Esophagus squamous epithelium (tissue), 5 donors: ENCODE measurements at regions of chr17 and their contacts with region 1.

Region 1: DNA sequence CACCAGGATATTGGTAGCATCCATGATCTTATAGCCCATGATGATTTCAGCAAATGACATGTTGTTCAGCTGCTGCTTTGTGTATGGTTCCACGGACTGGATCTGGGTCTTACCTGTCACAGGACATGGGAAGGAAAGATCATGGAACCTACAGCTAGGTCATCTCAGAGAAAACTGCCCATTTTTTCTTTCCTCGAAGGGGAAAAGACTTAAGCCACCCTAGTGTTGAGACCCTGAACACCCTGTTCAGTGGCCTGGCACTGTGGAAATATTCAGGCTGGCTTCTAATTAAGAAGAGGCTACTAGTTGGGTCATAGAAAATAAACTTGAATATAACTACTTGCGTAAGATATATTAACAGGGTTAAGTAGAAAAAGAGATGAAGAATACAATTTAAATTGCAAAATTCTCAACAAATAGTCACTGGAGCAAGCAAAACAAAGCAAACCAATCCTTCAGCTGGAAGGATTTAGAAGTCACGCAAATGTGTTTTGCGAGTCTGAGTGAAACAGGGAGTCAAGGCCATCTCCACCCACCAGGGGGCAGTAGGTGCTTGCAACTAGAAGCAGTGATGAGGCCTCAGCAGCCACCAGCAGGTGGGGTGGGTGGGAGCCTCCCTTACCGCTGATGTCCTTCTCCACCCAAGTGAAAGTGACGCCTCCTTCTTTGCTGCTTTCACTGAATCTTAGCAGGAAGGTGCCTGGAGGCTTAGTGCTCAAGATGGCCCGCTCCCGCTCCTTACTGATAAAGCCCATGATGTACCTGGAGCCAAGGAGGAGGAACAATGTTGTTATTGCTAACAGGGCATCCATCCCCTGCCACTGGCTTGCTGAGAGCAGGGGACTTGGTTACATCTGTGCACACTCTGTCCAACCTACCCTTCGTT is 34.3 kb downstream of the STAT5A start:
- DNase-seq: peak; percentile 81
- H3K4me3 ChIP-seq: no peak overlapping the region
- H3K27ac ChIP-seq: peak overlapping the region in 3 of 4 donors; percentile 41 to 64 (median 58)
- H3K4me1 ChIP-seq: peaks cover 0 to 45% (median 5%) of the 10 kb centered on the region in 3 donors
- H3K27me3 ChIP-seq: no peaks in the 10 kb centered on the region
- CTCF ChIP-seq: peak; percentile 97 to 100 (median 100)
- POLR2A ChIP-seq: no peak

Region 2: GRCh38 chr17:42266918-42267778 is 55.5 kb before region 1 on chr17:
- intact Hi-C with region 1: no loop called
- DNase-seq: no peak
- H3K4me3 ChIP-seq: no peak overlapping the region
- H3K27ac ChIP-seq: no peak overlapping the region
- H3K4me1 ChIP-seq: peaks cover 0 to 50% (median 12%) of the 10 kb centered on the region in 3 donors
- H3K27me3 ChIP-seq: no peaks in the 10 kb centered on the region
- CTCF ChIP-seq: no peak
- POLR2A ChIP-seq: no peak

Region 3: GRCh38 chr17:42403150-42403549 is 80.5 kb after region 1 on chr17:
- intact Hi-C with region 1: loop called (anchors 5 kb)
- DNase-seq: no peak
- H3K4me3 ChIP-seq: no peak overlapping the region
- H3K27ac ChIP-seq: peak overlapping the region in 3 of 4 donors; percentile 11 to 97 (median 32)
- H3K4me1 ChIP-seq: peaks cover 28 to 92% (median 52%) of the 10 kb centered on the region in 3 donors
- H3K27me3 ChIP-seq: no peaks in the 10 kb centered on the region
- CTCF ChIP-seq: peak in 3 of 6 experiments; percentile 11 to 16 (median 16)
- POLR2A ChIP-seq: no peak